ENCODE measurements at regions of chr1 and their contacts with region 1.

Region 1: DNA sequence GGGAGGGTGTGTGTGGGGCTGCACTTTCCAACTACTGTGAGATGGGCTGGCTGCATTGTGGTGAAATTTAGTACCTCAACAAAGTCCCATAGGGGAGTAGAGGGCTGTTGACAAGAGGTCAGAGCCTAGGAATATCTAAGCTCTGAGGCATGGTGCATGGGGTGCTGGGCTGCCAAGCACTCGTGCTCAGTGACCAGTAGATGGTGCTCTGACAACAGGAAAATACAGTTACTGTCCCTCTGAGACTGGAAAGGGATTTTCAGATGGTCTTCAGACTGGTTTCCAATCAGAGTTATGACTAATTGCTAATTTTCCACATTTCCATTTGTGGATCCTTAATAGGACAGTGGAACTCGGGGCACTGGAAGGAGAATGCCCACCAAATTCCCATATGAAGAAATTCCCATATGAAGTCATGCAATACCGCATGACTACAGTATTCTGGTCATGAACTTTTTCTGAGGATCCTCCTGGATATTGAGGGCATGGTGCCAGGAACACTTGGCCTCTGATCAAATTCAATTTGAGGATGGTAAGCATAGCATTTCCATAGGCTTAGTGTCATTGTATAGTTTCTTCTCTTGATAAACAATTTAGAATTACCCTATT is 4.1 kb upstream of the CACNA1E start:
- DNase-seq: peak; percentile 56
- ATAC-seq: peak; percentile 66
- H3K4me3 Mint-ChIP-seq: no peak overlapping the region
- H3K27ac Mint-ChIP-seq: no peak overlapping the region
- H3K4me1 Mint-ChIP-seq: peaks cover 21% of the 10 kb centered on the region
- H3K27me3 Mint-ChIP-seq: peaks cover 47% of the 10 kb centered on the region
- CTCF ChIP-seq: peak; percentile 55

Region 2: DNA sequence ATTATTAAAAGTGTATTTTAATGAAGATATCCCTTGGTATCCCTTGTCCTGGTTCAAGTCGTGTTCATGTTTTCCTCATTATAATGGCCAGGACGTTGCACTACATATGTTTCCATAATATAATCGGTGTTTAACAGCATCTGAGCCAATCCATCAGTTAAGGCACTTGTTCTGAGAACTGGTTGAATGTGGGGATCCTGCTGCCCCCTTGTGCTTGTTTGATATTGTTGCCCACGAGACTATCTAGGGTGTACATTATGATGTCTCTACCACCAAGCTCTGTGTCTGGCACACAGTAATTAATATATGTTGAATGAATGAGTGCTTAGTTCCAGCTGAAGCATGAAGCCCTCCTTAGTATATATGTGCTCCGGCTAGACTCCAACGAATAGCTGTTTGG is 197.0 kb after region 1 on chr1:
- CTCF ChIA-PET with region 1: interaction called, 27 read pairs
- POLR2A ChIA-PET with region 1: no interaction called
- DNase-seq: peak; percentile 32
- ATAC-seq: peak; percentile 81
- H3K4me3 Mint-ChIP-seq: no peak overlapping the region
- H3K27ac Mint-ChIP-seq: no peak overlapping the region
- H3K4me1 Mint-ChIP-seq: peaks cover 4% of the 10 kb centered on the region; the same call in 1 of the 2 replicates
- H3K27me3 Mint-ChIP-seq: no peaks in the 10 kb centered on the region
- CTCF ChIP-seq: no peak